Posterior vena cava (tissue), 2 donors: ENCODE measurements at regions of chr20 and their contacts with region 1.

Region 1: GRCh38 chr20:23727016-23727415 is 23.7 kb downstream of the CST1 start:
- DNase-seq: no peak

Region 2: GRCh38 chr20:23752481-23753193 is 25.6 kb after region 1 on chr20:
- intact Hi-C with region 1: loop called in 1 of 2 experiments (anchors 1 kb)
- DNase-seq: no peak

Region 3: DNA sequence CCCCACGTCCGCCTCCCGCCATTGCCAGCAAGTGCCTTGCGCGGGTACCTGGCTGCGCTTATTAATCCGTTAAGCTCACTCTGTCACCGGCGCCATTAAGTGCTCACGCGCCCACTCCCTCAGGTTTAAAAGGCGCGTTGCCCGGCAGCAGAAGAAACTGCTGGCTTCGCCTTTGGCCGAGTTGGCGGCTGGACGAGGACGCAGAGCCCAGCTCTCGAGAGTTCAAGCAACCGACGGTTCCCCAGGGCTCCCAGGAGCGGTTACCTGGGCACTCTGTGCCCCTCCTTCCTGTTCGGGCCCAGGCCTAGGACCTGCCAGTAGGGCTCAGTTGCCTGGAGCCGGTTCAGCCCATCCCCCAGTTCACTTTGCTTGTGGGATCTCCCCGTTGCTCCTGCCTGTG is 261.5 kb after region 1 on chr20 and contains the start of gene GGTLC1:
- intact Hi-C with region 1: no loop called
- DNase-seq: no peak
- total RNA-seq, gene GGTLC1: not detected